Stomach (tissue), 19 donors: ENCODE measurements at regions of chr6 and their contacts with region 1.

Region 1: DNA sequence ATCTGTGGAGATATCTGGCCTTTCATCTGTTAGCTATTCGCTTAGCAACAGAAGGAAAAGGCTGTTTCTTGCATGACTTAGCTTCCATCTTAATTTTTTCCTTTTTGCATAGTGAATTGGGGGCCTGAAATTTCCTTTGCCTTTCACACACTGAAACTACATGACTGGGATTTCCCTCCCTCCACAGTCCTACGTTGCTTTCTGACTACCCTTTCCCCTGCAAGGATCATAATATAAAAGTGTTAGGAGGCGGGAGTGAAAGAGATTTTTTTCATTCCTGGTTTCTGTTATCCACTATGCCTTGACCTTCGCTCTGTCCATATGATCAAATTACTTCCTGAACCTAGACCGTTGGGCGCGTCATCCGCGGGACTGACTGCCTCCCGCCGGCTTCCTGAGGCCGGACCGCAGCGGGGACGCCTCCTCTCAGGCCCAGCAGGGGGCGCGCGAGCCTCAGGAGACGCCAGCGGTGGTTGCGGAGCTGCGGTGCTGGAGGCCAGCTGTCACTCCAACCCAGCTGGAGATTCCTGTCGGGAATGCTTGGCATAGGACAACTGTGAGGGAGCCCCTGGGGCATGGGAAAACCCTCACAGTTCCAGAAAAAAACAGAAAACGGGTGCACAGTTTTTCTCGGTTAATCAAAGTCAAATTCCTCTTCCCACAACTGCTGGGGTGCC is 55.6 kb downstream of the MEP1A start:
- DNase-seq: peak; percentile 94 to 95
- H3K4me3 ChIP-seq: peak overlapping the region in 2 of 4 donors; percentile 12 to 13
- H3K27ac ChIP-seq: no peak overlapping the region
- H3K4me1 ChIP-seq: peaks cover 0 to 13% (median 11%) of the 10 kb centered on the region in 4 donors
- H3K27me3 ChIP-seq: no peaks in the 10 kb centered on the region
- CTCF ChIP-seq: peak in 6 of 7 experiments; percentile 52 to 96 (median 91)
- EP300 ChIP-seq: no peak
- POLR2A ChIP-seq: no peak

Region 2: GRCh38 chr6:46993846-46994245 is 145.0 kb after region 1 on chr6:
- intact Hi-C with region 1: loop called (anchors 10 kb)
- DNase-seq: no peak
- H3K4me3 ChIP-seq: no peak overlapping the region
- H3K27ac ChIP-seq: no peak overlapping the region
- H3K4me1 ChIP-seq: peaks cover 18 to 26% (median 24%) of the 10 kb centered on the region in 4 donors
- H3K27me3 ChIP-seq: no peaks in the 10 kb centered on the region
- CTCF ChIP-seq: no peak
- EP300 ChIP-seq: no peak
- POLR2A ChIP-seq: no peak

Region 3: DNA sequence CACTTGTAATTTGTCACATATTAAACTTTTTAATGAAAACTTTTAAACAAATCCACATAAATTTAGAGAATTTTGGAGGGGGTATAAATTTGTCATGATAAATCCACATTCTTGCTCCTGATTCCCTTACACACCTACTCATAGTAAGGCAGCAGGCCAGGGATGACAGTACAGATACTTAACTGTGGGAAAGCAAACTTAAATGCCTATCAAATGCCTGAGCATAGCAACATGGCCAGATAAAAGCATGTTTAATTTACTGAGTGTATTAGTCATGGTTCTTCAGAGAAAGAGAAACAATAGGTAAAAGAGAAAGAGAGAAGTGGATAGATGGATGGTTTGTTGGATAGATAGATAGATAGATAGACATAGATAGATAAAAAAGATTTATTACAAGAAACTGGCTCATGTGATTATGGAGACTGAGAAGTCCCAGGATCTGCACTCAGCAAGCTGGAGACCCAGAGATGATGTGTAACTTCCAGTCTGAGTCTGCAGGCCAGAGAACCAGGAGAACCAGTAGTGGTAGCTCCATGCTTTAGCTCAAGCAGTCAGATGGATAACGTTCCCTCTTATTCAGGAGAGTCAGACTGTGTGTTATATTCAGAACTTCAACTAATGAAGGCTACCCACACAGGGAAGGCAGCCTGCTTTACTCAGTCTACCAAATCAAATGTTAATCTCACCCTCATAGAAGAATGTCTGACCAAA is 209.2 kb after region 1 on chr6:
- intact Hi-C with region 1: loop called (anchors 10 kb)
- DNase-seq: no peak
- H3K4me3 ChIP-seq: no peak overlapping the region
- H3K27ac ChIP-seq: no peak overlapping the region
- H3K4me1 ChIP-seq: peaks cover 0 to 18% (median 5%) of the 10 kb centered on the region in 4 donors
- H3K27me3 ChIP-seq: no peaks in the 10 kb centered on the region
- CTCF ChIP-seq: no peak
- EP300 ChIP-seq: no peak
- POLR2A ChIP-seq: no peak